ENCODE measurements at regions of chr16 and their contacts with region 1.

Region 1: DNA sequence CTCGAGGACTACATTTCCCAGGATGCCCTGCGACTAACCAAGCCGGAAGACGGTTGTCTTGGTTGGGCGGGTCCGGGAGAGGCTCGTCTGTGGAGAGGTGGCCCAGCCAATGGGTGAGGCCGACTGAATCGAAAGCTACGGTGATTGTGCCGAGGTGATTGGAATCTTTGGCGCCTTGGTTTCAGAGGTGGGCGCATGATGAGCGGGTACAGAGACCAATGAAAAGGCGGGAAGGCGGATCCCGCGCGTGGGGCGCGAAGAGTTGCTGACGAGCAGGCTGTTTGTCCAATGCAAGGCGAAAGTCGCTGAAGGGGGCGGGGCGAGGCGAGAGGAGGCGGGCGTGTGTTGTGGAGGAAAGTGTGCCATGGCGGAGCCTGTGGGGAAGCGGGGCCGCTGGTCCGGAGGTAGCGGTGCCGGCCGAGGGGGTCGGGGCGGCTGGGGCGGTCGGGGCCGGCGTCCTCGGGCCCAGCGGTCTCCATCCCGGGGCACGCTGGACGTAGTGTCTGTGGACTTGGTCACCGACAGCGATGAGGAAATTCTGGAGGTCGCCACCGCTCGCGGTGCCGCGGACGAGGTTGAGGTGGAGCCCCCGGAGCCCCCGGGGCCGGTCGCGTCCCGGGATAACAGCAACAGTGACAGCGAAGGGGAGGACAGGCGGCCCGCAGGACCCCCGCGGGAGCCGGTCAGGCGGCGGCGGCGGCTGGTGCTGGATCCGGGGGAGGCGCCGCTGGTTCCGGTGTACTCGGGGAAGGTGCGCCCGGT is at the start of gene NFATC2IP:
- DNase-seq: peak; percentile 99 to 100 (median 100)
- H3K4me3 ChIP-seq: peak within 1 kb of the TSS; percentile 12 to 66
- H3K4me3 Mint-ChIP-seq: peak within 1 kb of the TSS; percentile 93 to 99 (median 96)
- H3K27ac ChIP-seq: peak within 1 kb of the TSS; percentile 70
- H3K27ac Mint-ChIP-seq: peak within 1 kb of the TSS; percentile 68 to 96 (median 93)
- H3K4me1 ChIP-seq: peaks cover 28% of the 10 kb centered on the region
- H3K4me1 Mint-ChIP-seq: peaks cover 14 to 40% (median 29%) of the 10 kb centered on the region in 4 donors
- H3K27me3 ChIP-seq: no peaks in the 10 kb centered on the region
- H3K27me3 Mint-ChIP-seq: no peaks in the 10 kb centered on the region
- total RNA-seq, gene NFATC2IP: 105 to 115 TPM

Region 2: GRCh38 chr16:28863929-28864793 is 86.7 kb before region 1 on chr16:
- CTCF ChIA-PET with region 1: interaction called, 15 read pairs
- POLR2A ChIA-PET with region 1: interaction called, 4 read pairs
- intact Hi-C with region 1: no loop called
- DNase-seq: peak in 3 of 5 donors; percentile 15 to 62 (median 28)
- H3K4me3 ChIP-seq: peak overlapping the region; percentile 36 to 65
- H3K4me3 Mint-ChIP-seq: peak overlapping the region; percentile 95 to 99 (median 98)
- H3K27ac ChIP-seq: peak overlapping the region; percentile 85
- H3K27ac Mint-ChIP-seq: peak overlapping the region; percentile 95 to 100 (median 98)
- H3K4me1 ChIP-seq: peaks cover 25% of the 10 kb centered on the region
- H3K4me1 Mint-ChIP-seq: peaks cover 16 to 35% (median 22%) of the 10 kb centered on the region in 4 donors
- H3K27me3 ChIP-seq: no peaks in the 10 kb centered on the region
- H3K27me3 Mint-ChIP-seq: no peaks in the 10 kb centered on the region

Region 3: GRCh38 chr16:28879841-28880588 is 70.8 kb before region 1 on chr16:
- CTCF ChIA-PET with region 1: interaction called, 14 read pairs
- POLR2A ChIA-PET with region 1: interaction called, 3 read pairs
- intact Hi-C with region 1: no loop called
- DNase-seq: peak; percentile 79 to 92 (median 82)
- H3K4me3 ChIP-seq: peak overlapping the region; percentile 49 to 82
- H3K4me3 Mint-ChIP-seq: peak overlapping the region; percentile 88 to 93 (median 90)
- H3K27ac ChIP-seq: peak overlapping the region; percentile 53
- H3K27ac Mint-ChIP-seq: peak overlapping the region in 2 of 7 donors; percentile 66 to 74
- H3K4me1 ChIP-seq: peaks cover 13% of the 10 kb centered on the region
- H3K4me1 Mint-ChIP-seq: peaks cover 3 to 18% (median 11%) of the 10 kb centered on the region in 4 donors
- H3K27me3 ChIP-seq: no peaks in the 10 kb centered on the region
- H3K27me3 Mint-ChIP-seq: peaks cover 0 to 7% of the 10 kb centered on the region in 2 donors

Region 4: GRCh38 chr16:29029168-29029994 is 78.6 kb after region 1 on chr16:
- CTCF ChIA-PET with region 1: no interaction called
- POLR2A ChIA-PET with region 1: no interaction called
- intact Hi-C with region 1: no loop called
- DNase-seq: peak in 1 of 5 donors; percentile 73
- H3K4me3 ChIP-seq: no peak overlapping the region
- H3K4me3 Mint-ChIP-seq: peak overlapping the region in 6 of 8 donors; percentile 7 to 52 (median 36)
- H3K27ac ChIP-seq: no peak overlapping the region
- H3K27ac Mint-ChIP-seq: peak overlapping the region in 6 of 7 donors; percentile 55 to 83 (median 64)
- H3K4me1 ChIP-seq: peaks cover 31% of the 10 kb centered on the region
- H3K4me1 Mint-ChIP-seq: peaks cover 17 to 37% (median 26%) of the 10 kb centered on the region in 4 donors
- H3K27me3 ChIP-seq: no peaks in the 10 kb centered on the region
- H3K27me3 Mint-ChIP-seq: no peaks in the 10 kb centered on the region